HEK293T (cell line): ENCODE measurements at regions of chr22 and their contacts with region 1.

Region 1: GRCh38 chr22:21001560-21002325 is at the start of gene THAP7:
- DNase-seq: peak; percentile 96

Region 2: DNA sequence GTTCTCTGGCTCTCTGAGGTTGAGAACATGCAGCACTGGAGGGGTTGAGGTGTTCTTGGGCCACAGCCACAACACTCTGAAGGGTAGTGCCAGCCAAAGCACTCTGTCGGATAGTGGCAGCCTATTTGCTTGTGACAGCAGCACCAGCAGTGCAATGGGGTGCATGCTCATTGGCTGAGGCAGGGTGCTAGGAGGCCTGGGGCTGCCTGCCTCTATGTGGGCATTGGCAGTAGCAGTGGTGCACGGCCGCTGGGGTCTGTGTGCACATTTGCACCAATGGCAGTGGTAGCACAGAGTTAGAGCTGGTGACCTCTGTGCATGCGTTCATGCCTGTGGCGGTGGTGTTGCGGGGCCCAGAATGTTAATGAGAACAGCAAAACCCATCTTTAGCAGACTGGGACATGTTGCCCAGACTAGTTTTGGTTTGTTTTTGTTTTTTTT is 168.5 kb before region 1 on chr22:
- CTCF ChIA-PET with region 1: no interaction called
- POLR2A ChIA-PET with region 1: no interaction called
- DNase-seq: no peak

Region 3: DNA sequence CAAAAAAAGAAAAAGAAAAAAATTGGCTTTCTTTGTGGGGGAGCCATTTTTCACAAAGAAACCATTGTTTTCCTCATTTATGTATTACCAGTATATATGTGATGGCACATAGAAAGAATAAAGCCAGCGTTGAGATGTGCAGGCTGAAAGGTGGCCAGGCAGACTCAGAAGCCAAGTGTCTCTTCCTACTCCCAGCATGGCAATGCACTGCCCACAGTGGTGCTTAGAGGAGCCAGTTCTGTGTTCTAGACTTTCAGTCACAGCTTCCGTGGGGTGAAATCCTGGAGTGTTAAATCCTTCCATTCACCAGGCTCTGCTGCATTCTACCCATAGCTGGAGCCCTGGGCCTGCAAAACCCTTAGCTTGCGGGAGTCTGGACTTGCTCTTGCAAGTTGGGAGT is 124.0 kb before region 1 on chr22:
- CTCF ChIA-PET with region 1: no interaction called
- POLR2A ChIA-PET with region 1: no interaction called
- DNase-seq: no peak

Region 4: GRCh38 chr22:20989323-20990138 is 12.2 kb before region 1 on chr22:
- CTCF ChIA-PET with region 1: no interaction called
- POLR2A ChIA-PET with region 1: interaction called, 28 read pairs
- DNase-seq: no peak

Region 5: GRCh38 chr22:21014202-21014725 is 12.5 kb after region 1 on chr22:
- CTCF ChIA-PET with region 1: interaction called, 6 read pairs
- POLR2A ChIA-PET with region 1: interaction called, 58 read pairs
- DNase-seq: peak; percentile 99

Region 6: GRCh38 chr22:21020802-21021429 is 19.2 kb after region 1 on chr22:
- CTCF ChIA-PET with region 1: interaction called, 6 read pairs
- POLR2A ChIA-PET with region 1: interaction called, 58 read pairs
- DNase-seq: peak; percentile 73

Region 7: GRCh38 chr22:21102659-21103267 is 101.0 kb after region 1 on chr22:
- CTCF ChIA-PET with region 1: interaction called, 5 read pairs
- POLR2A ChIA-PET with region 1: interaction called, 26 read pairs
- DNase-seq: peak; percentile 96